K562 (cell line): ENCODE measurements at regions of chr12 and their contacts with region 1.

Region 1: DNA sequence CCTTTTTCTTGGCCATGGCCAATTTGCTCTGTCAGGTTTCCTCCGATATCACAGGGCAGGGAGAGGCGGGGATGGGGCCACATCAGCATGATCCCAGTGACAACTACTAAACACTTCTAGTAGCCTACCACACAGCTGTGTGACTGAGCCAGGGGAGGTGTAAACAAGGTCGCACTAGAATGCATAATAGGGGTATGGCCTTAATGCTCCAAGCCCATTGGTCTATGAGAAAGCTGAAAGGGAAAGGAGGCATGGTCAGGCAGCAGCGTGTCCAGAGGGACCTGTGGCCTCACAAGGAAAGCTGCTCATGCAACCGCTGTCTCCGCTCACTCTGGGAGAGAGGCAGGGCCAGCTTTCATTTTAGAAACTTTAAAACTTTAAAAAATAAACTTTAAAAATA is 27.5 kb upstream of the ACTR6 start:
- DNase-seq: no peak
- ATAC-seq: peak; percentile 54
- H3K4me3 ChIP-seq: no peak overlapping the region
- H3K27ac ChIP-seq: no peak overlapping the region
- H3K4me1 ChIP-seq: peaks cover 0 to 5% of the 10 kb centered on the region in 2 experiments; a peak in 1 of 5 replicates
- H3K27me3 ChIP-seq: no peaks in the 10 kb centered on the region
- CTCF ChIP-seq: no peak
- EP300 ChIP-seq: no peak
- POLR2A ChIP-seq: no peak
- RAD21 ChIP-seq: no peak

Region 2: DNA sequence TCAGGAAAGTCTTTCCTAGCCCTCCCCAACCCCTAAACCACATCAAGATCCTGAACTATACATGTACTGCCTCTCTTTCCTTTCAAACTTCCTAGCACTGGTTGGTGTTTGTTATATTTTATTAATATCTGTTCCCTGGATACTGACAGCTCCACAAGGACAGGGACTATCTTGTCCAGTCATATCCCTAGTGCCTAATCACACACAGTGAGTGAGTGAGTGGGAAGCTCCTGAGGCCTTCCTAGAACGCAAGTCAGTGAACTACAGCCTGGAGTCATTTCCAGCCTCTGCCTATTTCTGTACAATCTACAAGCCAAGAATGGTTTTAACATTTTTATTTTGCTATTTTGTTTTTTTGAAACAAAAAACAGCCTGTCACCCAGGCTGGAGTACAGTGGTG is 20.0 kb after region 1 on chr12:
- CTCF ChIA-PET with region 1: no interaction called
- POLR2A ChIA-PET with region 1: interaction called, 10 read pairs
- in situ Hi-C with region 1: no loop called
- intact Hi-C with region 1: no loop called
- DNase-seq: no peak
- ATAC-seq: no peak
- H3K4me3 ChIP-seq: no peak overlapping the region
- H3K27ac ChIP-seq: no peak overlapping the region
- H3K4me1 ChIP-seq: peaks cover 0 to 2% of the 10 kb centered on the region in 2 experiments; a peak in 2 of 5 replicates
- H3K27me3 ChIP-seq: no peaks in the 10 kb centered on the region; a peak in 1 of 5 replicates
- CTCF ChIP-seq: no peak
- EP300 ChIP-seq: no peak
- POLR2A ChIP-seq: no peak
- RAD21 ChIP-seq: no peak

Region 3: GRCh38 chr12:100539202-100539601 is 366.1 kb after region 1 on chr12:
- CTCF ChIA-PET with region 1: no interaction called
- POLR2A ChIA-PET with region 1: no interaction called
- in situ Hi-C with region 1: no loop called
- intact Hi-C with region 1: no loop called
- DNase-seq: peak in 2 of 4 experiments; percentile 10 to 32
- ATAC-seq: peak; percentile 59; the same call in 2 of the 3 replicates
- H3K4me3 ChIP-seq: no peak overlapping the region
- H3K27ac ChIP-seq: no peak overlapping the region
- H3K4me1 ChIP-seq: no peaks in the 10 kb centered on the region
- H3K27me3 ChIP-seq: no peaks in the 10 kb centered on the region; a peak in 1 of 5 replicates
- CTCF ChIP-seq: no peak
- EP300 ChIP-seq: no peak
- POLR2A ChIP-seq: no peak
- RAD21 ChIP-seq: no peak